ENCODE measurements at regions of chr14 and their contacts with region 1.

Region 1: DNA sequence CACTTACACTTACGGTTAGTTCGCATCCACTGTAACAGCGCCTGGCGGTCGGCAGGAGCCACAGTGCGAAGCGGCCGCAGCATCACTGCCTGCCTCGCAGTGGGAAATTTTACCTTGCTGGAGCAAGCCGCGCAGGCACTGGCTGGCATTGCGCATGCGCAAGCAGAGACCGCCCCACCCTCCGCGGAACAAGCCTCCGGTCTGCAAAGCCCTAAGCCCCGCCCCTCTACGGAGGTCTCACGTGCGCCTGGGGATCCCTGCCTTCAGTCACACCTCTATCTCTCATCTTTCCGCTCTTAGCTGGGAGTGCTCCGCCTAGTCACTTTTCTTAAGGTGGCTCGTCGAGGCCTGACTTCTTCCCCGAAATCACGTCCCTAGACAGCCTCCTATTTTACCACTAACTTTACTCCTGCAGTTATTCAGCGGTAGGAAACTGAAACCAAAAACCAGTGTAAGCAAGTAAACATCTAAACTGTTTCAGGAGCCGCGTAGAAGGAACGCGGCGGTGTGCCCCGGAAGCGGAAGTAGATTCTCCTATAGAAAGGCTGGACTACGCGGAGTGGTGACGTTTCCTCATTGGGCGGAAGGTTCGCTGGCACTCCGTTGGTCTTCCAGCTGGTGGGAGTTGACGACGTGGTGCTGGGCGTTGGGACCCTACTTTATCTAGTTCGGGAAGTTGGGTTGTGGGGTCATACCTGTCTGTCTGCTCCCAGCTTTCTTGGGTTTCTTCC is at the start of gene SRP54:
- DNase-seq: peak; percentile 93 to 99 (median 97)
- H3K4me3 ChIP-seq: peak within 1 kb of the TSS; percentile 69 to 100 (median 92)
- H3K27ac ChIP-seq: peak within 1 kb of the TSS; percentile 93 to 100 (median 99)
- H3K27me3 ChIP-seq: no peaks in the 10 kb centered on the region
- CTCF ChIP-seq: peak in 17 of 56 donors; percentile 1 to 35 (median 16)
- total RNA-seq, gene SRP54: 20.1 to 61.6 (median 44.8) TPM

Region 2: GRCh38 chr14:34678306-34678705 is 304.3 kb before region 1 on chr14:
- intact Hi-C with region 1: loop called in 1 of 2 experiments (anchors 5 kb)
- DNase-seq: peak in 1 of 10 donors; percentile 54
- H3K4me3 ChIP-seq: peak overlapping the region in 41 of 59 donors; percentile 4 to 54 (median 30)
- H3K27ac ChIP-seq: peak overlapping the region; percentile 41 to 99 (median 93)
- H3K27me3 ChIP-seq: peaks cover 0 to 2% (median 0%) of the 10 kb centered on the region in 45 donors
- CTCF ChIP-seq: peak in 1 of 56 donors; percentile 17

Region 3: GRCh38 chr14:34714320-34715126 is 268.1 kb before region 1 on chr14 and contains the start of gene CFL2:
- intact Hi-C with region 1: loop called in 1 of 2 experiments (anchors 10 kb)
- DNase-seq: peak; percentile 86 to 96 (median 92)
- H3K4me3 ChIP-seq: peak within 1 kb of the TSS; percentile 63 to 98 (median 86)
- H3K27ac ChIP-seq: peak within 1 kb of the TSS; percentile 80 to 99 (median 98)
- H3K27me3 ChIP-seq: no peaks in the 10 kb centered on the region
- CTCF ChIP-seq: peak in 13 of 56 donors; percentile 3 to 40 (median 20)
- total RNA-seq, gene CFL2: 50.4 to 286 (median 109) TPM

Region 4: GRCh38 chr14:34875031-34875922 is 107.3 kb before region 1 on chr14 and contains the start of gene BAZ1A:
- intact Hi-C with region 1: loop called (anchors 2 to 5 kb)
- DNase-seq: peak in 4 of 10 donors; percentile 4 to 59 (median 22)
- H3K4me3 ChIP-seq: peak within 1 kb of the TSS; percentile 61 to 93 (median 84)
- H3K27ac ChIP-seq: peak within 1 kb of the TSS; percentile 73 to 99 (median 94)
- H3K27me3 ChIP-seq: no peaks in the 10 kb centered on the region
- CTCF ChIP-seq: peak in 23 of 56 donors; percentile 7 to 45 (median 19)
- total RNA-seq, gene BAZ1A: 3.8 to 20.1 (median 9.0) TPM

Region 5: GRCh38 chr14:35046048-35046741 is 63.6 kb after region 1 on chr14 and contains the start of gene FAM177A1:
- intact Hi-C with region 1: loop called (anchors 2 kb)
- DNase-seq: peak; percentile 97 to 99 (median 98)
- H3K4me3 ChIP-seq: peak within 1 kb of the TSS; percentile 60 to 97 (median 91)
- H3K27ac ChIP-seq: peak within 1 kb of the TSS; percentile 92 to 100 (median 98)
- H3K27me3 ChIP-seq: no peaks in the 10 kb centered on the region
- CTCF ChIP-seq: peak in 24 of 56 donors; percentile 11 to 45 (median 30)
- total RNA-seq, gene FAM177A1: 34.2 to 106 (median 58.8) TPM

Region 6: DNA sequence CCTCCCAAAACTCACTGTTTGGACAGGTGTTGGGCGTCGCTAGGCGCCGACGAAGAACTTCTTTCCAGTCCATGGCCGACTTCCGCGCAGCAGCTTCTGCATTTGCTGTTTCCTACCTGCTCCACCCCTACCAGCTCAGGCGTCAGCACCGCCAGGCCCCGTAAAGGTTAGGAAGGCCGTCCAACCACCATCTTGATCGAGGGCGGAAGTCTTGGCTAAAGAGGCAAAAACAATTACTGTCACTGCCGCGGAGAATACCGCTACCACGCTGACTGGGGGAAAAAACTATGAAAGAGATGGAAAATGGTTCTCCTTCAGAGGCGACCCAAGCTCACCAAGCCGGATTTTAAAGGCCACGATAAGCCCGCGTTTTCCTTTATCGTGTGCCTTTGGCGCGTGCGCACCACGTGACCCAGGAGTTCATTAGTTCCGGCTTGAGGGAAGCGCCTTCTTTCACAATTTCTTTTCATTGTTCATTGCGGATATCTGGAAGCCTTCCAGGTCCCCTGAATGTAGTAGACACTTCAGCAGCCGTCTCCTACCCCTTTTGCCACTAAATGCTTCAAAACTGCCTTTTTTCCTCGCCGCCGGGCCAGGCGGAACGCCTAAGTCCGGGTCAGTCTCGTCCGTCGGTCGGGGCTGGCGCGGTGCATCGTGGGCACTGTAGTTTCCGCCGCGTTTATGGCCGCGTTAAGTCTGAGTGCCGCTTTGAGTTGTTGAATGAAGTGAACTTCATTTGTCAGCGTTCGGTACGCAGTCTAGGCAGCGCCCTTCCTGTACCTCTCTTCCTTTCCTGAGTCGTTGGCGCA is 139.5 kb after region 1 on chr14 and contains the starts of genes PPP2R3C and PRORP:
- intact Hi-C with region 1: loop called (anchors 5 kb)
- DNase-seq: peak; percentile 86 to 93 (median 90)
- H3K4me3 ChIP-seq: peak within 1 kb of the TSS; percentile 66 to 99 (median 87)
- H3K27ac ChIP-seq: peak within 1 kb of the TSS; percentile 92 to 99 (median 98)
- H3K27me3 ChIP-seq: no peaks in the 10 kb centered on the region
- CTCF ChIP-seq: peak in 10 of 56 donors; percentile 2 to 31 (median 16)
- total RNA-seq, gene PPP2R3C: 24.5 to 46.9 (median 33.9) TPM
- total RNA-seq, gene PRORP: 13.9 to 33.4 (median 22.8) TPM

Region 7: GRCh38 chr14:35229495-35230089 is 247.0 kb after region 1 on chr14:
- intact Hi-C with region 1: no loop called
- DNase-seq: no peak
- H3K4me3 ChIP-seq: no peak overlapping the region
- H3K27ac ChIP-seq: no peak overlapping the region
- H3K27me3 ChIP-seq: no peaks in the 10 kb centered on the region
- CTCF ChIP-seq: peak in 53 of 56 donors; percentile 11 to 68 (median 40)

Region 8: DNA sequence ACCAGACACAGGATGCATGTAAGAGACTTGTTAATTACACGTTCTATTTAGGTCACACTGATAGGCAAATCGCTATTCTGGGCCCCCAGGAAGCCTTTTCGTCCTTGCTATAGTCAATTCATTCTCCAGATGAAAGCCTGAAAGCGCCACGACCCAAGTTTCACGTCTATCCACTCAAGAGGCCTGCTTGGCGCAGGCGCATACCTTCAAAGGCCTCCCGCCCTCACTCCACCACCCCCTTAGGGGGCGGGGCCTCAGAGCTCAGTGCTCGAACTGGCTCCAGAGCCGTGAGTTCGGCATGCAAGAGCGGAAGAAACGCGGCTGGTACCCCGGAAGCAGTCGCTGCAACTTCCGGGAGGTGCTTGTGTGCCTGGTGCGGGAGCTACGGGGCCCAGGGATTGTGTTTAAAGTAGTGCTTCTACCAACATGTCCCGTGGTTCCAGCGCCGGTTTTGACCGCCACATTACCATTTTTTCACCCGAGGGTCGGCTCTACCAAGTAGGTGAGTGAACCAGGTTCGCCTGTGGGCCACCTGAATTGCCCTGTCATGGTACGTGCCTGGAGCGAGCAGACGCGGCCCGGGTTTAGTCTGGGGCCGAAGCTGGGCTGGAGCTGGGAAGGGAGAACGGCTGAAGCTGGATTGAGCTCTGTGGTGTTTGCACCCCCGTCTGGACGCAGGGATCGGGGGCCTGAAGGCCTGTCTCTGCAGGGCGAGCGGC is 309.6 kb after region 1 on chr14 and contains the start of gene PSMA6:
- intact Hi-C with region 1: loop called in 1 of 2 experiments (anchors 5 kb)
- DNase-seq: peak; percentile 99 to 100 (median 99)
- H3K4me3 ChIP-seq: peak within 1 kb of the TSS; percentile 65 to 99 (median 93)
- H3K27ac ChIP-seq: peak within 1 kb of the TSS; percentile 41 to 98 (median 89)
- H3K27me3 ChIP-seq: no peaks in the 10 kb centered on the region
- CTCF ChIP-seq: peak in 30 of 56 donors; percentile 6 to 56 (median 30)
- total RNA-seq, gene PSMA6: 60.5 to 148 (median 104) TPM

Measured in dorsolateral prefrontal cortex (tissue), 120 donors.